Activated B cell treated with CpG ODN at 0.5 μM for 24 hours (primary cell): ENCODE measurements at regions of chrX and their contacts with region 1.

Region 1: DNA sequence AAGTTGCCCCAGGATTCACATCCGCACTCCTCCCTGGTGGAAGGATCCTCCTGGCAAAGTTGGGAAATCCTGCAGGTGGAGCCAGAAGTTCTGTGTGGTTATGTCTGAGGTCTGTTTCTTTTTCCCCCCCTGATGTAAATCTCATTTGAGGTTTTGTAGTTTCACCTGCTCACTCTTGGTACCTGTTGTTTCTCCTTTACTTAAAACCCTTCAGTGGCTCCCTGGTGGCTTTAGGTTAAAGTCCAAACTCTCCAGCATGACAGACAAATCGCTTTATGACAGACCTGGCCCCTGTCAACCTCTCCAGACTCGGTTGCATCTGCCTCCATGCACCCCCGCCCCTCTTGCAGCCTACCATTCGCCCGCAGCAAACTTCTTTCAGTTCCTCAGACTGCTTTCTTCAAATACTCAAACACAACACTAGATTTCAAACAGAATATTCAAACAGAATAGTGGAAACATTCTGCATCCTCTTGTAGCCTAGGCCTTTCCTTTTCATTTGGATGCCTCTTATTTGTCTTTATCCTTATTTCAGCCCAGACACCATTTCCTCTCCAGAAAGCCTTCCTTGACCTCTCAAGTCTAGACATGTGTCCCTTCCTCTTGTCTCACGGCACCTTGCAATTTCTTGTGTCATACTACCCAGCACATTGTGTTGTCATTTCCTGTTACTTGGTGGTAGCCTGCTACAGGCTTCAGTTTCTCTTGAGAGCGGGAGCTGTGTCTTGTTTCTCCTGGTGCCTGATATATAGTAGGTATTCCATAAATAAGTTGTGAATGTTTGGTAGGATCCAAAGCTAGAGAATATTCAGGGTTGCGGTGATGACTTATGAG is 24.8 kb downstream of the IL13RA1 start:
- DNase-seq: no peak
- ATAC-seq: peak; percentile 86
- H3K4me3 Mint-ChIP-seq: peak overlapping the region; percentile 53
- H3K27ac Mint-ChIP-seq: peak overlapping the region; percentile 88
- H3K4me1 Mint-ChIP-seq: peaks cover 24% of the 10 kb centered on the region
- H3K27me3 Mint-ChIP-seq: no peaks in the 10 kb centered on the region
- CTCF ChIP-seq: no peak

Region 2: GRCh38 chrX:118698516-118699170 is 53.5 kb before region 1 on chrX:
- CTCF ChIA-PET with region 1: no interaction called
- POLR2A ChIA-PET with region 1: no interaction called
- intact Hi-C with region 1: loop called (anchors 10 kb)
- DNase-seq: no peak
- ATAC-seq: peak; percentile 75
- H3K4me3 Mint-ChIP-seq: peak overlapping the region; percentile 17
- H3K27ac Mint-ChIP-seq: peak overlapping the region; percentile 59
- H3K4me1 Mint-ChIP-seq: peaks cover 34% of the 10 kb centered on the region
- H3K27me3 Mint-ChIP-seq: no peaks in the 10 kb centered on the region
- CTCF ChIP-seq: no peak

Region 3: GRCh38 chrX:118726887-118727739 is 25.1 kb before region 1 on chrX and contains the start of gene IL13RA1:
- CTCF ChIA-PET with region 1: no interaction called
- POLR2A ChIA-PET with region 1: interaction called, 6 read pairs
- intact Hi-C with region 1: loop called (anchors 1 kb)
- DNase-seq: peak; percentile 32
- ATAC-seq: peak; percentile 21
- H3K4me3 Mint-ChIP-seq: peak within 1 kb of the TSS; percentile 81
- H3K27ac Mint-ChIP-seq: peak within 1 kb of the TSS; percentile 59
- H3K4me1 Mint-ChIP-seq: peaks cover 71% of the 10 kb centered on the region
- H3K27me3 Mint-ChIP-seq: no peaks in the 10 kb centered on the region
- CTCF ChIP-seq: no peak
- total RNA-seq, gene IL13RA1: 13.9 and 15.0 TPM in 2 replicates